Activated T-helper 2 cell treated with anti-CD3 and anti-CD28 coated beads, Interferon-gamma antibody, Interleukin-2, Interleukin-4, amounts not matched to agents 10 μg/mL and 5 μg/mL and 100 μg/mL, durations not matched to agents 14 hours and 24 hours and 36 hours (primary cell): ENCODE measurements at regions of chr19 and their contacts with region 1.

Region 1: GRCh38 chr19:50511068-50511822 is at the start of gene JOSD2:
- DNase-seq: peak; percentile 97
- H3K4me3 Mint-ChIP-seq: peak within 1 kb of the TSS; percentile 90
- H3K27ac Mint-ChIP-seq: peak within 1 kb of the TSS; percentile 97
- H3K4me1 Mint-ChIP-seq: peaks cover 9% of the 10 kb centered on the region
- H3K27me3 Mint-ChIP-seq: no peaks in the 10 kb centered on the region
- total RNA-seq, gene JOSD2: 39.9 and 43.6 TPM in 2 replicates

Region 2: GRCh38 chr19:50376166-50377050 is 134.8 kb before region 1 on chr19 and contains the start of gene NR1H2:
- intact Hi-C with region 1: loop called (anchors 1 kb)
- DNase-seq: peak; percentile 91
- H3K4me3 Mint-ChIP-seq: peak within 1 kb of the TSS; percentile 92
- H3K27ac Mint-ChIP-seq: peak within 1 kb of the TSS; percentile 97
- H3K4me1 Mint-ChIP-seq: peaks cover 9% of the 10 kb centered on the region
- H3K27me3 Mint-ChIP-seq: no peaks in the 10 kb centered on the region
- total RNA-seq, gene NR1H2: 76.1 and 79.9 TPM in 2 replicates

Region 3: GRCh38 chr19:50383852-50384684 is 127.2 kb before region 1 on chr19 and contains the start of gene POLD1:
- intact Hi-C with region 1: loop called (anchors 2 kb)
- DNase-seq: peak; percentile 99
- H3K4me3 Mint-ChIP-seq: peak within 1 kb of the TSS; percentile 99
- H3K27ac Mint-ChIP-seq: peak within 1 kb of the TSS; percentile 96
- H3K4me1 Mint-ChIP-seq: peaks cover 28% of the 10 kb centered on the region
- H3K27me3 Mint-ChIP-seq: no peaks in the 10 kb centered on the region
- total RNA-seq, gene POLD1: 153 and 162 TPM in 2 replicates

Region 4: GRCh38 chr19:50476224-50476942 is 34.9 kb before region 1 on chr19 and contains the starts of genes EMC10 and GARIN5A:
- intact Hi-C with region 1: loop called (anchors 1 kb)
- DNase-seq: peak; percentile 92
- H3K4me3 Mint-ChIP-seq: peak within 1 kb of the TSS; percentile 99
- H3K27ac Mint-ChIP-seq: peak within 1 kb of the TSS; percentile 77
- H3K4me1 Mint-ChIP-seq: peaks cover 10% of the 10 kb centered on the region
- H3K27me3 Mint-ChIP-seq: no peaks in the 10 kb centered on the region
- total RNA-seq, gene EMC10: 76.0 and 76.2 TPM in 2 replicates
- total RNA-seq, gene GARIN5A: 0.28 and 0.82 TPM in 2 replicates

Region 5: GRCh38 chr19:50500060-50500752 is 11.0 kb before region 1 on chr19:
- intact Hi-C with region 1: no loop called
- DNase-seq: no peak
- H3K4me3 Mint-ChIP-seq: no peak overlapping the region
- H3K27ac Mint-ChIP-seq: no peak overlapping the region
- H3K4me1 Mint-ChIP-seq: no peaks in the 10 kb centered on the region
- H3K27me3 Mint-ChIP-seq: no peaks in the 10 kb centered on the region

Region 6: DNA sequence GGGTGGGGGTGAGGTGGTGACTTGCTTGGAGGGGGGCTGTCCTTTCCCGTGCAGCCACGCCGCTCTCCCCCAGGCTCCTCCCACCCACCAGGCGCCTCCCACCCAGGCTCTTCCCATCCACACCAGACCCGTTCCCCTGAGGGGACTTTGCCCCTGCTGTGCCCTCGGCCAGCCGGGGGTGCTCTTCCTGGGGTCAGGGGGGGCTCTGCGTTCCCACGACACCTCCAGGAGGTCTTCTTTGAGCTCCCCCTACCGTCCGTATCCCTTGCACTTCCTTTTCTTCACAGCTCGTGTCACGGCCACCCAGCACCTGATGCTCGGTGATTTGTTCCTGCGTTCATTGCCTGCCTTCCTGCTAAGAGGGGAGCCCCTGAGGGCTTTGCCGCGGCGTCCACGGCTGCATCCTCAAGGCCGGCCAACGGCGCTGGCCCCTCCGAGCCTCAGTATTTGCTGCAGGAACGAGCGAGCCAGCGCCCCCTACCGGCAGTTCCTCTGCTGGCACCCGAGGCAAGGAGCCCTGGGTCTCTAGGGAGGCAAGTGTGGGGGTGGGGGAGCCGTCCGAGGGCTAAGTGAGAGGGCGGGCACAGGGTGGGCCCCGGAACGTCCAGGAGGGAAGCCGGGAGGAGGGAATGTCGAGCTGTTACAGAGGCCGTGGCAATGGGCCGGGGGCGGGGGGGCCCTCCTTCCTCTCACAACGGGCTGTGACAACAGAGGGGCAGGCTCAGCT is 45.2 kb after region 1 on chr19:
- intact Hi-C with region 1: no loop called
- DNase-seq: peak; percentile 73
- H3K4me3 Mint-ChIP-seq: peak overlapping the region; percentile 96
- H3K27ac Mint-ChIP-seq: peak overlapping the region; percentile 84
- H3K4me1 Mint-ChIP-seq: peaks cover 4% of the 10 kb centered on the region
- H3K27me3 Mint-ChIP-seq: peaks cover 33% of the 10 kb centered on the region

Region 7: DNA sequence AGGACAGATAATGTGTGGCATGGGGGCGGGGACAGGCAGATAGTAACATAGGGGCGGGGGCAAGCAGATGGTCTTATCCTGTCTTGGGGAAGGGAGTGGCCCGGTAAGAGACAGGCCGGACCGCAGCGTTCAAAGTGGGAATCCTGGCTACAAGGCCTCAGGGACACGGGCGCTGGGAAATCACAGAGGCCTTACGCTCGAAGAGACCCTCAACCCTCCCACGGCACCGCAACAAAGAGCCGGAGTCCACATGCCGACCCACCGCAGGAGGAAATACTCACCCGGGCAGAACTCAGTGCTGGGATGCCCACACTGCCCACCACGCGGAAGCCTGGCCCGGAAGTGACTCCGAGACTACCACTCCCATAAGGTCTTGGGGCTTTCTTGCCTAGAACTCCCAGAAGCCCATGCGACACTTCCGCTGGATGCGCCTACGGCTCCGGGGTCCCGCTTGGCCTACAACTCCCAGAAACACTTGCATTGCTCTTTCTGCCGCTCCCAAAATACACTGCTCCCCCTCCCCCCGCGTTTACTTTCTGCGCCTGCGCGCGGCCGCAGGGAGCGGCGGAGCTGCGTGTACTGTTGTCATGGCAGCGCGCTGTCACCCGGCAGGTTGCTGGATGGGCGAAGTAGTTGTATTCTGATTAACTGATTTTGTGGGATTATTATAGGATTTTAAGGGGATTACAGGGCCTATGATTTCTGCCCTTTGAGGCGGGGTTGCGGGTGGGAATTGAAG is 597.0 kb after region 1 on chr19 and contains the start of gene CTU1:
- intact Hi-C with region 1: loop called (anchors 2 kb)
- DNase-seq: peak; percentile 99
- H3K4me3 Mint-ChIP-seq: peak within 1 kb of the TSS; percentile 84
- H3K27ac Mint-ChIP-seq: peak within 1 kb of the TSS; percentile 82
- H3K4me1 Mint-ChIP-seq: peaks cover 19% of the 10 kb centered on the region
- H3K27me3 Mint-ChIP-seq: no peaks in the 10 kb centered on the region
- total RNA-seq, gene CTU1: 9.7 and 11.0 TPM in 2 replicates